Activated CD4-positive, alpha-beta memory T cell treated with anti-CD3 and anti-CD28 coated beads, Interleukin-2, amount 10 ng/mL, durations not matched to agents 7 days and 5 days (primary cell): ENCODE measurements at regions of chr16 and their contacts with region 1.

Region 1: DNA sequence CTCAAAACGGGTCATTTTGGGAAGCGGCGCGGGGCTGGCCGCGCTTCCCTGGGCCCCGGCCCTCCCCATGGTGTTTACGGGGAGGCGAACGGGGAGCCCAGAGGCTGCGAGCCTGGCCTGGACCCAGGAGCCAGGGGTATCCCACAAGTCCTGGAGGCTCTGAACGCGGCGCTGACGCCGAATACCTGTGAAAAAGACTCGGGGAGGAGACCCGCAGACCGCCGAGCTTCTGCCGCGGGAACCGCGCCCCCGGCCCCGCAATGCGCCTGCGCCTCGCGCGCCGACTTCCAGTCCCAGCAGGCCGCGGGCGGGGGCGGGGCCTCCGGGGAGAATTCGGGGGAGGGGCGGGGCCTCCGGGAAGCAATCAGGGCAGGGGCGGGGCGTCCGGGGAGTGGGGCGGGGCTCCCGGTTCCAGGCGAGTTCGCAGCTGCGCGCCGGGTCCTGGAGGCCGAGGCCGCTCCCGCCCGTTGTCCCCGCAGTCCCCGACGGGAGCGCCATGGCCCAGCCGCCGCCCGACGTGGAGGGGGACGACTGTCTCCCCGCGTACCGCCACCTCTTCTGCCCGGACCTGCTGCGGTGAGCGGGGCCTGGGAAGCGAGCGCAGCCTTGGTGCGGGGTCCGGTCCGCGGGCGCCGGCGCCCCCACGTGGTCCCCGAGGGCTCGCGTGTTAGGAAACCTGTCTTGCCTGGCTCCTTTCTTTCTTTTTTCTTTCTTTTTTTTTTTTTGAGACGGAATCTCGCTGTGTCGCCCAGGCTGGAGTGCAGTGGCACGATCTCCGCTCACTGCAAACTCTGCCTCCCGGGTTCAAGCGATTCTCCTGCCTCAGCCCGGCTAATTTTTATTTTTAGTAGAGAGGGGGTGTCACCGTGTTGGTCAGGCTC is at the start of gene DECR2:
- DNase-seq: peak; percentile 98
- H3K4me3 Mint-ChIP-seq: peak within 1 kb of the TSS; percentile 82
- H3K27ac Mint-ChIP-seq: peak within 1 kb of the TSS; percentile 83
- H3K4me1 Mint-ChIP-seq: peaks cover 23% of the 10 kb centered on the region
- H3K27me3 Mint-ChIP-seq: peaks cover 1% of the 10 kb centered on the region
- total RNA-seq, gene DECR2: 3.0 to 3.3 TPM

Region 2: DNA sequence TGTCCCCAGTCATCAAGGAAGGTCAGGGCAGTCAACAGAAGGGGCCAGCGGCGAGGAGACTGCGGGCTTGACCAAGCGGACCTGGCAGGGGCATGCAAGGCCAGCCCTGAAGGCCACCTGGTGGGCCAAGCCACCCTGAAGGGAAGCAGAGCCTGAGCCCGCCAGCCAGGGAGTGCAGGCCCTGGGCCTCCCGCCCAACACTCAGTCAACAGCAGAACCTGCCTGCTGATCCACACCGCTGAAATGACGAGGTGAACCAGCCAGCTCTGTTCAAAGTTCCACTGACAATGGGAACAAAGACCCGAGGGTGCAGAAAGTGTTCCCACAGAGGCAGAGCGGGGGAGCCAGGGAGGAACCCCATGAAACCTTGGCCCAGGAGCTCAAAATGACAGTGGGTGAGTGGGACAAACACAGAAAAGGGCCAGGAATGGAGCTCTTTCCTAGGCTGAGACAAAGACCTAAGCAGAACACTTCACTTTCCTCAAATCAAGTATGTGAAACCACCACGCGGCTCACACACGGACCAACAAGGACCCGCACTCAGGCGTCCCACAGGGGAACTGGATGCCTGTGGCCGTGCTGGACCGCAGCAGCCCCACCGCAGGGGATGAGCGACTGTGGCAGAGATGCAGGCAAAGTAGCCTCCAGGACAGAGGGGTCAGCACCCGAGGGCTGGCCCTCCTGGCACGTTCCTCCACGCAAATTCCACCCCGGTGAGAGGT is 61.2 kb before region 1 on chr16:
- CTCF ChIA-PET with region 1: no interaction called
- POLR2A ChIA-PET with region 1: no interaction called
- DNase-seq: no peak
- H3K4me3 Mint-ChIP-seq: no peak overlapping the region
- H3K27ac Mint-ChIP-seq: no peak overlapping the region
- H3K4me1 Mint-ChIP-seq: peaks cover 52% of the 10 kb centered on the region
- H3K27me3 Mint-ChIP-seq: no peaks in the 10 kb centered on the region

Region 3: GRCh38 chr16:361872-362701 is 39.6 kb before region 1 on chr16:
- CTCF ChIA-PET with region 1: no interaction called
- POLR2A ChIA-PET with region 1: no interaction called
- DNase-seq: peak; percentile 81
- H3K4me3 Mint-ChIP-seq: no peak overlapping the region
- H3K27ac Mint-ChIP-seq: no peak overlapping the region
- H3K4me1 Mint-ChIP-seq: peaks cover 5% of the 10 kb centered on the region
- H3K27me3 Mint-ChIP-seq: no peaks in the 10 kb centered on the region

Region 4: DNA sequence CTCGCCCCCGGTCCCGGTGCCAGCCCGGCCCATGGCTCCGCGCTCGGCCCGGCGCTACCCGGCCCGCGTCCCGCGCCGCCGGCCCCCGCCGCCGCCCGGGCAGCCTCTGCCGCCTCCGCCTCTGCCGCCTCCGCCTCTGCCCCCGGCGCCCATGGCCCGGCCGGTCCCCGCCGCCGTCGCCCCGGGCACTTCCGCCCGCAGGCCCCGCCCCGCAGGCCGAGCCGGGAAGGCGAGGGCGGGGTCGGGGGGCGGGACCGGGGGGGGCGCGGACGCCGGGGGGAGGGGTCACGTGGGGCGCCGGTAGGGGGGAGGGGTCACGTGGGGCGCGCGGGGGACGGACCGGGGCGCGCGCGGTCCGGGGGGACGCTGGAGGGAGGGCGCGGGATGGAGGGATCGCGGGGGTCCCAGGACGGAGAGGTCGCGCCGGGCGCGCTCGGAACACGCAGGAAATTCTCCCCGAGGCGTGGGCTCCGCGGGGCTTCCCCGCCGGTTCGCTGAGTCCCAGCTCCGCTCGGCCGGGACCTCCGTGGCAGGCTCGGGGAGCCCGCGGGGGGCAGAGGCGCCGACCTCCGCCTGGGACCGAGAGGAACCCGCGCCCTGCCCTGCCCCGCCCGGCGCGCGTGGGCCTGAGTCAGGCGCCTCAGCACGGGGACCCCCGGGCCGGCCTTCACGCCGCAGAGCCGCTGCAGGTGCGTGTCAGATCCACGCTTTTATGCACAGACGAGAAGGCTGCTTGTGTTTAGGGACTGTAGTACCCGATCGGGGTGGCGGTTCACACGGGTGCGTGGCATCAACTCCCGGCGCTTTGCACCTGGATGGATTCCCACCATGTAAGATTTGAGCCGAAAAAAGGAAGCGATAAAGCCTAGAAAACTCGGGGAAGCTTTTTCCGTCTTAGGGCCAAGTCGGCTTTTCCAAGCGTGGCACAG is 19.7 kb before region 1 on chr16 and contains the start of gene PGAP6:
- CTCF ChIA-PET with region 1: no interaction called
- POLR2A ChIA-PET with region 1: interaction called, 12 read pairs
- DNase-seq: peak; percentile 76
- H3K4me3 Mint-ChIP-seq: peak within 1 kb of the TSS; percentile 83
- H3K27ac Mint-ChIP-seq: peak within 1 kb of the TSS; percentile 61
- H3K4me1 Mint-ChIP-seq: peaks cover 24% of the 10 kb centered on the region
- H3K27me3 Mint-ChIP-seq: peaks cover 10% of the 10 kb centered on the region
- total RNA-seq, gene PGAP6: 59.2 to 59.9 TPM

Region 5: GRCh38 chr16:425082-425718 is 23.5 kb after region 1 on chr16 and contains the start of gene RAB11FIP3:
- CTCF ChIA-PET with region 1: interaction called, 5 read pairs
- POLR2A ChIA-PET with region 1: interaction called, 11 read pairs
- DNase-seq: peak; percentile 86
- H3K4me3 Mint-ChIP-seq: peak within 1 kb of the TSS; percentile 79
- H3K27ac Mint-ChIP-seq: peak within 1 kb of the TSS; percentile 68
- H3K4me1 Mint-ChIP-seq: peaks cover 31% of the 10 kb centered on the region
- H3K27me3 Mint-ChIP-seq: peaks cover 15% of the 10 kb centered on the region
- total RNA-seq, gene RAB11FIP3: 21.2 to 25.4 TPM